Heart left ventricle (tissue), 16 donors: ENCODE measurements at regions of chr2 and their contacts with region 1.

Region 1: GRCh38 chr2:172931918-172932520 is 143.6 kb upstream of the MAP3K20 start:
- DNase-seq: peak in 4 of 5 donors; percentile 56 to 78 (median 70)
- ATAC-seq: peak in 2 of 4 donors; percentile 25 to 45
- H3K4me3 ChIP-seq: peak overlapping the region in 8 of 12 donors; percentile 7 to 36 (median 26)
- H3K27ac ChIP-seq: peak overlapping the region in 11 of 12 donors; percentile 47 to 78 (median 71)
- H3K4me1 ChIP-seq: peaks cover 3 to 46% (median 31%) of the 10 kb centered on the region in 12 donors
- H3K27me3 ChIP-seq: no peaks in the 10 kb centered on the region
- CTCF ChIP-seq: peak; percentile 57 to 82 (median 72)
- POLR2A ChIP-seq: no peak

Region 2: DNA sequence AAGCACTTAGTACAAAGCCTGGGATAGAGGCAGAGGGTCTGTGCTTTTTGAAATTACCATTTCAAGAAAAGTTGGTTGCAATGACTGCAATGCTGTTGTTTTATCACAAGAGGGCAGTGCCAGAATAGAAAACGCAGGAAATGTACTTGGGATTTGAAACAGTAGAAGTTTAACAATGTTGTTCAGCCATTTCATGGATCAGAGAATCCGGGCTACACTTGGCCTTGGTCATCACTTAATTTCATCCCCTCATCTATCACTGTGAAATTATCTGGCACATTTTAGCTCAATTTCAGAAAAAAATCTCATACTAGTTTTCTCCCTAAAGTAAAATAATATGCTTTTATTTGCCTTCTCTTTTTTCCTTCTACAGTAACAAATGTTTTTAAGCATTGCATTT is 125.5 kb before region 1 on chr2:
- intact Hi-C with region 1: loop called in 3 of 10 experiments (anchors 1 to 2 kb)
- DNase-seq: no peak
- ATAC-seq: peak in 2 of 4 donors; percentile 34 to 47
- H3K4me3 ChIP-seq: no peak overlapping the region
- H3K27ac ChIP-seq: no peak overlapping the region
- H3K4me1 ChIP-seq: peaks cover 0 to 6% (median 0%) of the 10 kb centered on the region in 12 donors
- H3K27me3 ChIP-seq: no peaks in the 10 kb centered on the region
- CTCF ChIP-seq: peak; percentile 77 to 94 (median 88)
- POLR2A ChIP-seq: no peak

Region 3: DNA sequence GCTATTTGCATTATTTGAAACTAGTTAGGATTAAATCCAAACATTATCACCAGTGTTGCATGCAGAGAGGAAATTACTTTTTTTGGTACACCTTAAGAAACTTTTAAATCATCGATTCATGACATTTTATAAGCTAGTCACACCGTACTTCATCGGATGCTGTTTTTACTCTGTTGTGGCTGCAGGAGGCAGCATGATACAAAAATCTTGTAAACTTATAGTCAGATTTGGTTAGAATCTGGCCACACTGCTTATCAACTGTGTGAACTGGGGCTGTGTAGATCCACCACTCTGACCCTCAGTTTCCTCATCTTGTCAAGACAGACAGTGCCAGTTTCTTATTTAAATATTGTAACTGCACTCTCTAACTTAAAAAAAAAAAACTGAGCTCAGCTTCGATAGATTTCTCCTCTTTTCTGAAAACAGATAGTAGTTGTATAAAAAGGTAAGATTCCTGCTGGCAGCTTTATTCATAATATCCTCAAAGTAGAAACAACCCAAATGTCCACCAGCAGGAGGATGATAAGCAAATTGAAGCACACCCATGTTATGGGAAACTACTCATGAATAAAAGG is 118.6 kb before region 1 on chr2:
- intact Hi-C with region 1: loop called in 9 of 10 experiments (anchors 1 to 2 kb)
- DNase-seq: no peak
- ATAC-seq: peak in 1 of 4 donors; percentile 78
- H3K4me3 ChIP-seq: no peak overlapping the region
- H3K27ac ChIP-seq: no peak overlapping the region
- H3K4me1 ChIP-seq: no peaks in the 10 kb centered on the region
- H3K27me3 ChIP-seq: peaks cover 0 to 4% (median 0%) of the 10 kb centered on the region in 9 donors
- CTCF ChIP-seq: peak; percentile 39 to 73 (median 58)
- POLR2A ChIP-seq: no peak

Region 4: DNA sequence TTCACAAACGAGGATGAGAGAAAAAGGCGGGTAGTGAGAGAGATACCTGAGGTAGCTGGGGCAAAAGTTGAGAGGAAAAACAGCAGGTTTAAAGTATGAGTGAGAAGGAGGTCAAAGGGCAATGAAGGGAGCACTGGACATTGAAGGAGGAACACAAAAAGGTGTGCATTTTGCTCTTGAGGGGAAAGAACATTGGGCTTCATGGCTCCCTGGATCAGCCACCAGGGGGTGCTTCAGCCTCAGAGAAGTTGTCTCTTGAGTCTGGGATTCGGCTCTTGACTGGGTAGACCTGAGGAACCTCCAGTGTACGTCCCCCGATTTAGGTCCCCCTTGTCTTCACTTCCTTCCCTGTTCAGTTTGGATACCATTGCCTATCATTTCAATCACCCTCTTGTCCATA is 67.8 kb before region 1 on chr2:
- intact Hi-C with region 1: loop called (anchors 1 to 5 kb)
- DNase-seq: peak in 4 of 5 donors; percentile 35 to 60 (median 51)
- ATAC-seq: peak; percentile 40 to 75 (median 63)
- H3K4me3 ChIP-seq: no peak overlapping the region
- H3K27ac ChIP-seq: no peak overlapping the region
- H3K4me1 ChIP-seq: peaks cover 3 to 49% (median 34%) of the 10 kb centered on the region in 12 donors
- H3K27me3 ChIP-seq: no peaks in the 10 kb centered on the region
- CTCF ChIP-seq: peak; percentile 39 to 78 (median 64)
- POLR2A ChIP-seq: no peak

Region 5: DNA sequence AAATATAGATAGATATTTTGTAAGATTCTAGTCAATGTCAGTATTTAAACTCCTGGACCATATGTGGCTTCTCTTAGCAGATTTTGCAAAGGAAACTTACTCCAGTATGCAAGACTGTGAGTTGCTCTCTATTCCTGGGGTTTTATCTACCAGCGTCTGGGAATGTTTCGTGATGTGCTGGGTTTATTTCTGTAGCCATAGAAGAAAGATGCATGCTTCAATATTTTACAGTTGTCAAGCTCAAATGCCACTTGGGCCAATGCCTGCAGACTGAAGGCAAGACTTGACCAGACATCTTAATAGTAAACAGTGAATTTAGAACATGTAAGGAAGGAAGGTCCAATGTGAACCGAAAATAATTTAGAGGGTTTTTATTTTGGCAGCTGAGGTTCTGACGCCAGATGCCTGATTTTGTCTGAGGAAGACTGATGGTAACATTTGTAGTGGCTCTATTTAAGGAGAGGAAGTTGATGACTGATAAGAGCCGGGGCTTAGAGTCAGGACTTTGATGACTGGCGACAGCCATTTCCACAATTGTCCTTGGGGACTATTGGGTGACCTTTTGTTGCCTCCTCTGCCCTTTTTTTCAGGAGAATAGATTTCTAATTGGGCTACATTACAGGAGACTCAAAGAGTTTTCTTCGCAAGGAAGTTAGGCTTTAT is 42.1 kb before region 1 on chr2:
- intact Hi-C with region 1: loop called in 1 of 10 experiments (anchors 5 kb)
- DNase-seq: peak in 3 of 5 donors; percentile 30 to 42 (median 39)
- ATAC-seq: peak; percentile 60 to 90 (median 84)
- H3K4me3 ChIP-seq: peak overlapping the region in 2 of 12 donors; percentile 3 to 16
- H3K27ac ChIP-seq: peak overlapping the region in 10 of 12 donors; percentile 6 to 60 (median 44)
- H3K4me1 ChIP-seq: peaks cover 0 to 29% (median 20%) of the 10 kb centered on the region in 12 donors
- H3K27me3 ChIP-seq: no peaks in the 10 kb centered on the region
- CTCF ChIP-seq: no peak
- POLR2A ChIP-seq: no peak

Region 6: DNA sequence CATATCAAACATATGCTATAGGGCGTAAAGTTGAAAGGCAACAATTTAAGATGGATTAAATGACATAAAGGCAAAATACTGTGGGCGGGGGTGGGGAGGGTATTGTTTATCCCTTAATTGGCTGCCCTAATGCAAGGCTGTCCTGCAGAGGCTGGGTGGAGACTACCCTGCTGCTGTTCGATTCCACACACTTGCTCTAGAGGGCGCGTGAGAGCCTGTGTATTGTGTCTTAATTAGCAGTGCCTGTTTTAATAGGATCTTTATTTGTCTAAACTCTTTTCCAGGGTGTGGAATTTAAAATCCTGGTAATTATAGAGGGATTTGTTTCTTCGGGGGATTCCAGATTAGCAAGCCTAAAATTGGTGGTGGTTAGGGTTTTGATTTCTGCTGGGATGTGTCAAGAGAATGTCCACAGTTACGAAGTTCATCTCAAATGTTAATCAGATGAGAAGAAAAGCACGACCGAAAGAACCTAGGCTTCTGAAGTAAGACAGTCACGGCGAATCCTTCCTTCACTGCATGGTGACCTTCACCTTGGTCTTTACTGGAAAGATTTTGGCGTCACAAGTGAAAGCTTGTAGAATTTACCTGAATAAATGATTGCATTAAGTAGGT is 40.1 kb after region 1 on chr2:
- intact Hi-C with region 1: no loop called
- DNase-seq: peak in 3 of 5 donors; percentile 30 to 49 (median 42)
- ATAC-seq: peak in 2 of 4 donors; percentile 35 to 56
- H3K4me3 ChIP-seq: no peak overlapping the region
- H3K27ac ChIP-seq: no peak overlapping the region
- H3K4me1 ChIP-seq: peaks cover 0 to 43% (median 23%) of the 10 kb centered on the region in 12 donors
- H3K27me3 ChIP-seq: no peaks in the 10 kb centered on the region
- CTCF ChIP-seq: peak; percentile 56 to 88 (median 74)
- POLR2A ChIP-seq: no peak